GM10248 (cell line): ENCODE measurements at regions of chr1 and their contacts with region 1.

Region 1: GRCh38 chr1:55337801-55338447 is 122.8 kb upstream of the USP24 start:
- DNase-seq: peak; percentile 63
- CTCF ChIP-seq: peak; percentile 27

Region 2: GRCh38 chr1:55235722-55236121 is 102.2 kb before region 1 on chr1:
- CTCF ChIA-PET with region 1: no interaction called
- POLR2A ChIA-PET with region 1: no interaction called
- DNase-seq: no peak
- CTCF ChIP-seq: no peak

Region 3: DNA sequence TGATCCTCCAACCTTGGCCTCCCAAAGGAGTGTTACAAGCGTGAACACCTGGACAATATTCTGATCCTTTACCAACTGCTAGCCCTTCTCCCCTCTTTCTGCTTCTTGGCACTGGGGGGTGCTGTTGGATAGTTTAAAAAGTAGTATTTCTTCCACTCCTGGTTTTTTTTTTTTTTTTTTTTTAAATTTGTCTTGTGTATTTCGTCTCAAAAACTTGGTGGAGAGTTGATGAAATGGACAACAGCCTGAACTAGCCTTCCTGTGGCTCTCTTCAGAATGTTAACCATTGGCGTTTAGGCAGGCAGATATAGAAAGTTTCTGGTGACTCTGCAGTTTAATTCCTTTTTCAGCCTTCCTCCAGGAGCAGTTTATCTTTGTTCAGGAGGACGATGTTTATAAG is 53.1 kb before region 1 on chr1:
- CTCF ChIA-PET with region 1: interaction called, 16 read pairs
- POLR2A ChIA-PET with region 1: no interaction called
- DNase-seq: no peak
- CTCF ChIP-seq: peak; percentile 60